Motor neuron (in vitro differentiated cells): ENCODE measurements at regions of chr19 and their contacts with region 1.

Region 1: GRCh38 chr19:41263850-41264580 is at the start of gene HNRNPUL1:
- ATAC-seq: peak; percentile 70 to 85 (median 80)
- H3K4me3 ChIP-seq: peak within 1 kb of the TSS; percentile 76 to 89 (median 88)
- H3K27ac ChIP-seq: peak within 1 kb of the TSS; percentile 98 to 99
- H3K4me1 ChIP-seq: peaks cover 5 to 15% of the 10 kb centered on the region in 2 donors
- total RNA-seq, gene HNRNPUL1: 79.3 to 196 (median 113) TPM

Region 2: GRCh38 chr19:40662921-40663694 is 600.9 kb before region 1 on chr19:
- in situ Hi-C with region 1: loop called in 5 of 9 experiments (anchors 25 kb)
- ATAC-seq: peak; percentile 70 to 96 (median 92)
- H3K4me3 ChIP-seq: peak overlapping the region; percentile 41 to 73 (median 55)
- H3K27ac ChIP-seq: peak overlapping the region; percentile 16 to 70
- H3K4me1 ChIP-seq: peaks cover 4 to 7% of the 10 kb centered on the region in 2 donors

Region 3: DNA sequence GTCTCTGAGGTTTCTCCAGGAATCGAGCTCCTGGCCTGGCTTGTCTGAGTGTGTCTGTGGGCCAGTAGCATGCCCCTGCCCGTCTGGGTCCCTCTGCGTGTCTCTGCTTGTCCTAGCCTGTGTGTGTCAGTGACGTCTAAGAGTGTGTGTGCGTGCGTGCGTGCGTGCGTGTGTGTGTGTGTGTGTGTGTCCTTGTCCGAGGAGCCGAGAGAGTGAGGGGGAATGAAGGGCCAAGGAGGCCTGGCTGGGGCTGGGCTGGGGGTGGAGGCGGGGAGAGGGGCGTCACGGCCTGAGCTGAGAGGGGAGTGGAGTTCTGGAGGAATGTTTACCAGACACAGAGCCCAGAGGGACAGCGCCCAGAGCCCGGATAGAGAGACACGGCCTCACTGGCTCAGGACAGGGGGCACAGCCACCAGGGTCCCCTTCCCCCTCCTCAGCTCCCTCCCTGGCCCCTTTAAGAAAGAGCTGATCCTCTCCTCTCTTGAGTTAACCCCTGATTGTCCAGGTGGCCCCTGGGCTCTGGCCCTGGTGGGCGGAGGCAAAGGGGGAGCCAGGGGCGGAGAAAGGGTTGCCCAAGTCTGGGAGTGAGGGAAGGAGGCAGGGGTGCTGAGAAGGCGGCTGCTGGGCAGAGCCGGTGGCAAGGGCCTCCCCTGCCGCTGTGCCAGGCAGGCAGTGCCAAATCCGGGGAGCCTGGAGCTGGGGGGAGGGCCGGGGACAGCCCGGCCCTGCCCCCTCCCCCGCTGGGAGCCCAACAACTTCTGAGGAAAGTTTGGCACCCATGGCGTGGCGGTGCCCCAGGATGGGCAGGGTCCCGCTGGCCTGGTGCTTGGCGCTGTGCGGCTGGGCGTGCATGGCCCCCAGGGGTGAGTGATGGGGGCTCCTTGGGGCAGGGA is 45.2 kb before region 1 on chr19 and contains the start of gene AXL:
- in situ Hi-C with region 1: loop called in 1 of 9 experiments (anchors 10 kb)
- ATAC-seq: peak; percentile 54 to 84 (median 76)
- H3K4me3 ChIP-seq: peak within 1 kb of the TSS in 4 of 5 donors; percentile 10 to 31 (median 25)
- H3K27ac ChIP-seq: no peak within 1 kb of the TSS
- H3K4me1 ChIP-seq: peaks cover 0 to 12% of the 10 kb centered on the region in 2 donors
- total RNA-seq, gene AXL: 0.55 to 20.8 (median 4.9) TPM